PC-3 (cell line): ENCODE measurements at regions of chr5 and their contacts with region 1.

Region 1: DNA sequence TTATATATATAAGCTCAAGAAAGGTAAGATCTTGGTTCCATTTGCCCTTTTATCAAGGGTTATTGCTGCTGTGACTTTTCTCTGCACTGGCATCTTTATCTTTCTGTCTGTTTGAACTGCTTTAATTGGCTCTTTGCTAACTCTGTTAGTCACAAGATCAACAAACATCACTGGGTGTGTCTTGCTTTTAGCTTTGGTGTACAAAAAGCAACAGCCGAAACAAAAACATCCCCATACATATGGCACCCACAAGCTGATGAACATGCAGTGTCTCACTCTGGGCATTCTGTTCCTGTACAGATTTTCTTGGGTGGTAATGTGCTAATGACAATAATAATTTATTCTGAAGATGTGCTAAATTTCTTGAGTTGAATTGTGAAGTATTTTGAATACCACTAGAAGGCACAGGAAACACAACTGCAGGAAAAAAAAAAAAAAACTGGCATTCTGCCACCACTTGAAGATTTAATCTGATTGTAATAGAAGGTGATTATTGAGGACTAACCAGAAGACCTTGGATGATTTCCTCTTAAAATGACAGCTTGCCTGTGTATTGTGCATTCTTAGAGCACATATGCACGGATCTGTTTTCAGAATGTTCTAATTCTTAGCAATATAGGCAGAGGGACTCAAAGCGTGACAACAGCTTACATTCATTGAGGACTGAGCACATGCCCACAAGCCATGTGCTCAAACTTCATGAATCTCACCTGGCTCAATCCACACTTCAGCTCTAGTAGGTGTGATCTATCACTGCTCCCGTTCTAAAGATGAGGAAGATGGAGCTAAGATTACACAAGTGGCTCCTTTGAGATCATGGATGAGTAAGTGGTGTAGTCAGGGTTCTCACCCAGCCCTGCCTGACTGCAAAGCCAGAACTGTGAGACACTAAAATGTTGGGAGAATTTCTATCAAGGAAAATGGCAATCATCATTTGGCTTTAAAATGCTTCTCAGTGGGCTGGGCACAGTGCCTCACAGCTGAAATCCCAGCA is 96.4 kb downstream of the EBF1 start:
- DNase-seq: peak; percentile 77
- ATAC-seq: peak; percentile 93
- H3K4me3 ChIP-seq: no peak overlapping the region
- H3K27ac ChIP-seq: peak overlapping the region; percentile 75
- H3K4me1 ChIP-seq: peaks cover 19% of the 10 kb centered on the region
- H3K27me3 ChIP-seq: no peaks in the 10 kb centered on the region
- CTCF ChIP-seq: no peak

Region 2: GRCh38 chr5:158943057-158943456 is 60.3 kb before region 1 on chr5:
- CTCF ChIA-PET with region 1: no interaction called
- POLR2A ChIA-PET with region 1: no interaction called
- intact Hi-C with region 1: loop called (anchors 2 kb)
- DNase-seq: peak; percentile 91
- ATAC-seq: peak; percentile 96
- H3K4me3 ChIP-seq: no peak overlapping the region
- H3K27ac ChIP-seq: peak overlapping the region; percentile 51; the same call in 1 of the 2 replicates
- H3K4me1 ChIP-seq: peaks cover 12% of the 10 kb centered on the region
- H3K27me3 ChIP-seq: no peaks in the 10 kb centered on the region
- CTCF ChIP-seq: no peak

Region 3: GRCh38 chr5:159987031-159987674 is 983.8 kb after region 1 on chr5:
- CTCF ChIA-PET with region 1: no interaction called
- POLR2A ChIA-PET with region 1: no interaction called
- intact Hi-C with region 1: no loop called
- DNase-seq: peak; percentile 89
- ATAC-seq: peak; percentile 98
- H3K4me3 ChIP-seq: peak overlapping the region; percentile 69
- H3K27ac ChIP-seq: 0 out of 2 replicates have a peak overlapping the region, but pooled peaks have one; percentile 12
- H3K4me1 ChIP-seq: peaks cover 10% of the 10 kb centered on the region
- H3K27me3 ChIP-seq: no peaks in the 10 kb centered on the region
- CTCF ChIP-seq: peak; percentile 91